Breast epithelium (tissue), 4 donors: ENCODE measurements at regions of chr20 and their contacts with region 1.

Region 1: DNA sequence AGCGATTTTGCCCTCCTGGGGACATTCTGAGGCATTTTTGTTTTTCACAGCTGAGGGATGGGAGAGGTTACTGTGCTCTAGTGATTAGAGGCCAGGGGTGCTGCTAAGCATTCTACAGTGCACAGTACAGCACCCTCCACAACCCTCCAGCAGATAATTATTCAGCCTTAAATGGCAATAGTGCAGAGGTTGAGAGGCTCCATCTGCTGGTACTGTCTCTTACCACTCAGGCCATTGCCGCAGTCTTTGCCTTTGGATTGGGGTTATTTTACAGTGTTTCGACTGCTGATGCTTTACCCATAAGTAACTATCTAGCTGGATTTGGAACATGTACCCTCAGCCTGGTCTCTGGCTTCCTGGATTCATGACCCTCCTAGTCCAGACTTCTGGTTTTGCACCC is 705.3 kb downstream of the KIF16B start:
- DNase-seq: no peak
- H3K4me3 ChIP-seq: no peak overlapping the region
- H3K27ac ChIP-seq: no peak overlapping the region
- H3K4me1 ChIP-seq: no peaks in the 10 kb centered on the region
- H3K27me3 ChIP-seq: no peaks in the 10 kb centered on the region
- CTCF ChIP-seq: no peak
- POLR2A ChIP-seq: no peak

Region 2: GRCh38 chr20:14375416-14375985 is 1492.4 kb before region 1 on chr20:
- intact Hi-C with region 1: no loop called
- DNase-seq: no peak
- H3K4me3 ChIP-seq: no peak overlapping the region
- H3K27ac ChIP-seq: no peak overlapping the region
- H3K4me1 ChIP-seq: no peaks in the 10 kb centered on the region
- H3K27me3 ChIP-seq: no peaks in the 10 kb centered on the region
- CTCF ChIP-seq: no peak
- POLR2A ChIP-seq: no peak

Region 3: GRCh38 chr20:16777126-16777525 is 909.2 kb after region 1 on chr20:
- intact Hi-C with region 1: loop called (anchors 10 kb)
- DNase-seq: no peak
- H3K4me3 ChIP-seq: no peak overlapping the region
- H3K27ac ChIP-seq: no peak overlapping the region
- H3K4me1 ChIP-seq: no peaks in the 10 kb centered on the region
- H3K27me3 ChIP-seq: no peaks in the 10 kb centered on the region
- CTCF ChIP-seq: no peak
- POLR2A ChIP-seq: no peak